MCF 10A (cell line): ENCODE measurements at regions of chr20 and their contacts with region 1.

Region 1: GRCh38 chr20:36754656-36755222 is 8.8 kb upstream of the NDRG3 start:
- DNase-seq: peak; percentile 65
- H3K4me3 Mint-ChIP-seq: no peak overlapping the region
- H3K27ac Mint-ChIP-seq: no peak overlapping the region
- H3K4me1 Mint-ChIP-seq: no peaks in the 10 kb centered on the region
- H3K27me3 Mint-ChIP-seq: no peaks in the 10 kb centered on the region
- CTCF ChIP-seq: peak; percentile 66

Region 2: GRCh38 chr20:36506253-36506652 is 248.5 kb before region 1 on chr20:
- CTCF ChIA-PET with region 1: no interaction called
- POLR2A ChIA-PET with region 1: no interaction called
- intact Hi-C with region 1: no loop called
- DNase-seq: peak; percentile 25
- H3K4me3 Mint-ChIP-seq: no peak overlapping the region
- H3K27ac Mint-ChIP-seq: no peak overlapping the region
- H3K4me1 Mint-ChIP-seq: peaks cover 5% of the 10 kb centered on the region
- H3K27me3 Mint-ChIP-seq: no peaks in the 10 kb centered on the region
- CTCF ChIP-seq: no peak

Region 3: DNA sequence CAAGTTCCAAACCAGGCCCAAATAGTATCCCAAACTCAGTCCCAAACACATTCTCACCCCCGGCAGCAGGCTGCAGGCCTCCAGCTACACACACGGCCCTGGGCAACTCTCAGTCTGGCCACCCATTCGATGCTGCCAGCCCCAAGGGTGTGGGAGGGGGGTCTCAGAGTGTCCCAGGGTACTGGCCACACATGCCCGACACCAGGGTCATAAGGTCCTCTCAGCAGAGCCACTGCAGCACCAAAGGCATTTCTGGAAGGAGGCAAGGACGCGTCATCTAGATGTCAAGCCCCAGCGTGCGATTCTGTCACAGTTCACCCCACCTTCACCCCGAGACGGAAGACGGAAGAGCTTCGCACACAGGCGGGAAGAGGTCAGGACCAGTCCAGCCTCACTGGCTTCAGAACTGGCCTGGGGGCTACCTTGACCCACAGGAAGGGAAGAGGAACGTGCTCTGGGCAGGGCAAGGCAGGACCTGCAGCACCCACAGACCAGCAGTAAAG is 203.9 kb before region 1 on chr20:
- CTCF ChIA-PET with region 1: interaction called, 3 read pairs
- POLR2A ChIA-PET with region 1: no interaction called
- intact Hi-C with region 1: loop called (anchors 1 kb)
- DNase-seq: no peak
- H3K4me3 Mint-ChIP-seq: no peak overlapping the region
- H3K27ac Mint-ChIP-seq: no peak overlapping the region
- H3K4me1 Mint-ChIP-seq: no peaks in the 10 kb centered on the region
- H3K27me3 Mint-ChIP-seq: no peaks in the 10 kb centered on the region
- CTCF ChIP-seq: no peak

Region 4: GRCh38 chr20:36613974-36614373 is 140.8 kb before region 1 on chr20:
- CTCF ChIA-PET with region 1: interaction called, 32 read pairs
- POLR2A ChIA-PET with region 1: interaction called, 4 read pairs
- intact Hi-C with region 1: loop called (anchors 2 kb)
- DNase-seq: peak; percentile 14
- H3K4me3 Mint-ChIP-seq: no peak overlapping the region
- H3K27ac Mint-ChIP-seq: no peak overlapping the region
- H3K4me1 Mint-ChIP-seq: peaks cover 5% of the 10 kb centered on the region
- H3K27me3 Mint-ChIP-seq: no peaks in the 10 kb centered on the region
- CTCF ChIP-seq: no peak

Region 5: DNA sequence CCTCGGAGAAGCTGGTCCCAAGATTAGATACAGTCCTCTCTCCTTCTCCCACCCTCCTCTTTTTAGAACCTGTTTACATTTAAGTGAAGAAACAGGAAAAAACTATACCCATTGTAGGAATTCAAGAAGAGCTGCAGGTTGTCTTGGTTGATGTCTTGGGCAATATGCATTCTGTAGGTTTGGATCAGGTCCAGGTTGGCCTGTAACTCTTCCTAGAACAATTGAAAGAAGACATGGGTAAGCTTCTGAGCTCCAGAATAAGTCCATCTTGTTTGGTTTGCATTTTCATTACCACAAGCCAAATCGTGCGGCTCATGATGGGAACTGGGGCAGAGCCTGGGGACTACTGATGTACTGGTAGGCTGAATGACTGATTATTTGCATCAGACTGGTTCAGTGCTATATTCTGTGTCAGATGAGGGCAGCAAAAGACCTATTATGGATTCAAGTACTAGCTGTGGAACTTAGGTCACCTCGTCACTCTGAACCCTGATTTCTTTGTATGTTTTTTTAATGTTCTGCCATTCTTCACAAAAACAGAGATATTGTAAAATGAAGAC is 88.5 kb before region 1 on chr20:
- CTCF ChIA-PET with region 1: interaction called, 14 read pairs
- POLR2A ChIA-PET with region 1: interaction called, 4 read pairs
- intact Hi-C with region 1: no loop called
- DNase-seq: peak; percentile 58
- H3K4me3 Mint-ChIP-seq: no peak overlapping the region
- H3K27ac Mint-ChIP-seq: no peak overlapping the region
- H3K4me1 Mint-ChIP-seq: peaks cover 5% of the 10 kb centered on the region
- H3K27me3 Mint-ChIP-seq: no peaks in the 10 kb centered on the region
- CTCF ChIP-seq: peak; percentile 14

Region 6: GRCh38 chr20:36736451-36737182 is 18.1 kb before region 1 on chr20:
- CTCF ChIA-PET with region 1: interaction called, 13 read pairs
- POLR2A ChIA-PET with region 1: no interaction called
- intact Hi-C with region 1: no loop called
- DNase-seq: no peak
- H3K4me3 Mint-ChIP-seq: no peak overlapping the region
- H3K27ac Mint-ChIP-seq: no peak overlapping the region
- H3K4me1 Mint-ChIP-seq: no peaks in the 10 kb centered on the region
- H3K27me3 Mint-ChIP-seq: no peaks in the 10 kb centered on the region
- CTCF ChIP-seq: no peak

Region 7: GRCh38 chr20:36773597-36774390 is 19.1 kb after region 1 on chr20 and contains the start of gene DSN1:
- CTCF ChIA-PET with region 1: interaction called, 46 read pairs
- POLR2A ChIA-PET with region 1: interaction called, 10 read pairs
- intact Hi-C with region 1: no loop called
- DNase-seq: peak; percentile 96
- H3K4me3 Mint-ChIP-seq: peak within 1 kb of the TSS; percentile 79
- H3K27ac Mint-ChIP-seq: peak within 1 kb of the TSS; percentile 90
- H3K4me1 Mint-ChIP-seq: peaks cover 8% of the 10 kb centered on the region
- H3K27me3 Mint-ChIP-seq: no peaks in the 10 kb centered on the region
- CTCF ChIP-seq: no peak
- total RNA-seq, gene DSN1: 7.8 and 8.4 TPM in 2 replicates

Region 8: DNA sequence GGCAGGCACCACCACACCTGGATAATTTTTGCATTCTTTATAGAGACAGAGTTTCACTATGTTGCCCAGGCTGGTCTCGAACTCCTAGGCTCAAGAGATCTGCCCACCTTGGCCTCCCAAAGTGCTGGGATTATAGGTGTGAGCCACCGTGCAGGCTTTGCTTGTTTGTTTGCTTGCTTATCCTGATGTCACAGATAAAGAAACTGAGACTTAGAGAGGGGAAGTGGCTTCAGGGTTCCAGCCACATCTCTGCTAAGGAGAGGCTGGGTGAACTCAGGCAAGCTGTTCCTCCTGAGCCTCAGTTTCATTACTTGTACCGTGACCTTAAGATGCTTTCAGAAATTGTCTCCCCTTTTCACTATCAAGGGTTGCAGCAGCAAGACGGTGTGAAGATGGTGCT is 72.7 kb after region 1 on chr20:
- CTCF ChIA-PET with region 1: no interaction called
- POLR2A ChIA-PET with region 1: no interaction called
- intact Hi-C with region 1: no loop called
- DNase-seq: no peak
- H3K4me3 Mint-ChIP-seq: no peak overlapping the region
- H3K27ac Mint-ChIP-seq: no peak overlapping the region
- H3K4me1 Mint-ChIP-seq: peaks cover 5% of the 10 kb centered on the region
- H3K27me3 Mint-ChIP-seq: no peaks in the 10 kb centered on the region
- CTCF ChIP-seq: no peak

Region 9: GRCh38 chr20:36998652-36999051 is 243.9 kb after region 1 on chr20:
- CTCF ChIA-PET with region 1: no interaction called
- POLR2A ChIA-PET with region 1: no interaction called
- intact Hi-C with region 1: no loop called
- DNase-seq: no peak
- H3K4me3 Mint-ChIP-seq: no peak overlapping the region
- H3K27ac Mint-ChIP-seq: no peak overlapping the region
- H3K4me1 Mint-ChIP-seq: no peaks in the 10 kb centered on the region
- H3K27me3 Mint-ChIP-seq: no peaks in the 10 kb centered on the region
- CTCF ChIP-seq: no peak